ENCODE measurements at regions of chr7 and their contacts with region 1.

Region 1: GRCh38 chr7:121610243-121610642 is 214.1 kb upstream of the FAM3C start:
- DNase-seq: no peak
- ATAC-seq: no peak
- H3K4me3 ChIP-seq: no peak overlapping the region
- H3K4me3 Mint-ChIP-seq: no peak overlapping the region
- H3K27ac ChIP-seq: no peak overlapping the region
- H3K27ac Mint-ChIP-seq: no peak overlapping the region
- H3K4me1 ChIP-seq: no peaks in the 10 kb centered on the region
- H3K4me1 Mint-ChIP-seq: no peaks in the 10 kb centered on the region
- H3K27me3 ChIP-seq: no peaks in the 10 kb centered on the region
- H3K27me3 Mint-ChIP-seq: no peaks in the 10 kb centered on the region
- CTCF ChIP-seq: no peak

Region 2: GRCh38 chr7:121449329-121449728 is 160.9 kb before region 1 on chr7:
- CTCF ChIA-PET with region 1: no interaction called
- POLR2A ChIA-PET with region 1: no interaction called
- intact Hi-C with region 1: no loop called
- DNase-seq: no peak
- ATAC-seq: no peak
- H3K4me3 ChIP-seq: no peak overlapping the region
- H3K4me3 Mint-ChIP-seq: no peak overlapping the region
- H3K27ac ChIP-seq: no peak overlapping the region
- H3K27ac Mint-ChIP-seq: no peak overlapping the region
- H3K4me1 ChIP-seq: no peaks in the 10 kb centered on the region
- H3K4me1 Mint-ChIP-seq: no peaks in the 10 kb centered on the region
- H3K27me3 ChIP-seq: no peaks in the 10 kb centered on the region
- H3K27me3 Mint-ChIP-seq: no peaks in the 10 kb centered on the region
- CTCF ChIP-seq: no peak

Region 3: GRCh38 chr7:121591926-121592325 is 18.3 kb before region 1 on chr7:
- CTCF ChIA-PET with region 1: no interaction called
- POLR2A ChIA-PET with region 1: no interaction called
- intact Hi-C with region 1: no loop called
- DNase-seq: no peak
- ATAC-seq: no peak
- H3K4me3 ChIP-seq: no peak overlapping the region
- H3K4me3 Mint-ChIP-seq: no peak overlapping the region
- H3K27ac ChIP-seq: no peak overlapping the region
- H3K27ac Mint-ChIP-seq: no peak overlapping the region
- H3K4me1 ChIP-seq: no peaks in the 10 kb centered on the region
- H3K4me1 Mint-ChIP-seq: no peaks in the 10 kb centered on the region
- H3K27me3 ChIP-seq: peaks cover 0 to 2% of the 10 kb centered on the region in 2 experiments
- H3K27me3 Mint-ChIP-seq: peaks cover 2% of the 10 kb centered on the region
- CTCF ChIP-seq: no peak

Region 4: DNA sequence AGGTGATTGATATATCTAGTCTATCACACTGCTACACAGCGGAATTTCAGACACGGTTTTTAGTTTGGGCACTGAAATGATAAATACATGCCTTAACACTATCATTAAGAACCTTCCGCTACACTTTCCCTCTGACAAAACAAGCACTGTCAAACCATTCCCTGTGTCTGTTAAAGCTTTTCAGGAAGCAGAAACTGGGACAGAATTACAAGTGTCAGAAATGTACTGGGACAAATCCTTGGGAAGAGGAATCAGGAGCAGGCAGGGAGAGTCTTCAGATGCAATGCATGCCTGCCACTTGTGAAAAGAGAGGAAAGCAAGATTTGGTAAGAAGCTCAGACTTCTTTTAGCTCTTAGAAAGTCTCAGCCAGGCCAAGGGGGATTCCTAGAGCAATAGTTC is 65.9 kb after region 1 on chr7:
- CTCF ChIA-PET with region 1: no interaction called
- POLR2A ChIA-PET with region 1: no interaction called
- intact Hi-C with region 1: loop called in 1 of 2 experiments (anchors 10 kb)
- DNase-seq: no peak
- ATAC-seq: no peak
- H3K4me3 ChIP-seq: no peak overlapping the region
- H3K4me3 Mint-ChIP-seq: no peak overlapping the region
- H3K27ac ChIP-seq: no peak overlapping the region
- H3K27ac Mint-ChIP-seq: no peak overlapping the region
- H3K4me1 ChIP-seq: no peaks in the 10 kb centered on the region
- H3K4me1 Mint-ChIP-seq: no peaks in the 10 kb centered on the region
- H3K27me3 ChIP-seq: no peaks in the 10 kb centered on the region
- H3K27me3 Mint-ChIP-seq: no peaks in the 10 kb centered on the region
- CTCF ChIP-seq: no peak